CD4-positive, alpha-beta memory T cell (primary cell): ENCODE measurements at regions of chr3 and their contacts with region 1.

Region 1: DNA sequence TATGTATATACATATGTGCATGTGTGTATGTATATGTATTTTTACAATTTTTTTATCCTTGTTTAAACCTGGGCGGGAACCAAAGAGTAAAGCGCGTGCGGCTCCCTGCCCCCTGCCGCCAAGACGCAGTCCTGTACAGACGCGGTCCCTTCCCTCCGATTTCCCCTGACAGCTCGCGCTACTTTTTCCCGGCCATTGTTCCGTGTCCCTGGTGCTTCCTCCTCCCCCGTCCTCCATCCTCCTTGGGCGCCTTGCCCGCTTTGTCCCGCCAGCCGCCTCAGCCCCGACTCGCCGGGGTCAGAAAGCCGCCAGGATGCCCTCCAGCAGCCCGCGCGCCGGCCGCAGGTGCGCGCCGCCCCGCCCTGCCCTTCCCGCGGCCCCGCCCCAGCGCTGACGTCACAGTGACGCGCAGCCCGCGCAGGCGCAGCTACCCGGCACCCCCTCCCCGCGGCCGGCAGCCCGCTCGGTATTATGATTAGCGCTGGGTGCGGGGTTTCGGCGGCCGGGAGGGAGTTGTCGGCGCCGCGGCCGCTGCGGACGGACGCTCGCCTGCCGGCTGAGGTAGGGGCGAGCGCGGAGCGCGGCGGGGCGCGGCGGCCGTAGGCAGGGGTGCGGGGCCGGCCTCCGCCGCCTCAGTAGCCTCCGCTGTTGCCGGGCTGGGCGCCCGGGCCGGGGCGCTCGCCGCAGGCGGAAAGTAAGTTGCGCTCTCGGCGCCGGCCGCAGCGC is at the start of gene SNRK:
- DNase-seq: peak; percentile 86 to 97 (median 92)
- H3K4me3 ChIP-seq: peak within 1 kb of the TSS; percentile 84 to 88
- H3K4me3 Mint-ChIP-seq: peak within 1 kb of the TSS; percentile 98 to 100 (median 99)
- H3K27ac ChIP-seq: peak within 1 kb of the TSS; percentile 78
- H3K27ac Mint-ChIP-seq: peak within 1 kb of the TSS; percentile 99 to 100 (median 100)
- H3K4me1 ChIP-seq: peaks cover 32% of the 10 kb centered on the region
- H3K4me1 Mint-ChIP-seq: peaks cover 28 to 46% (median 32%) of the 10 kb centered on the region in 4 donors
- H3K27me3 ChIP-seq: no peaks in the 10 kb centered on the region
- H3K27me3 Mint-ChIP-seq: peaks cover 0 to 2% of the 10 kb centered on the region in 2 donors
- total RNA-seq, gene SNRK: 104 to 108 TPM

Region 2: GRCh38 chr3:43180027-43180426 is 106.3 kb before region 1 on chr3:
- CTCF ChIA-PET with region 1: interaction called, 6 read pairs
- POLR2A ChIA-PET with region 1: interaction called, 22 read pairs
- intact Hi-C with region 1: no loop called
- DNase-seq: peak; percentile 51 to 69 (median 65)
- H3K4me3 ChIP-seq: peak overlapping the region in 1 of 2 donors; percentile 20
- H3K4me3 Mint-ChIP-seq: peak overlapping the region; percentile 52 to 87 (median 78)
- H3K27ac ChIP-seq: peak overlapping the region; percentile 27
- H3K27ac Mint-ChIP-seq: peak overlapping the region; percentile 83 to 98 (median 95)
- H3K4me1 ChIP-seq: peaks cover 46% of the 10 kb centered on the region
- H3K4me1 Mint-ChIP-seq: peaks cover 40 to 72% (median 63%) of the 10 kb centered on the region in 4 donors
- H3K27me3 ChIP-seq: no peaks in the 10 kb centered on the region
- H3K27me3 Mint-ChIP-seq: no peaks in the 10 kb centered on the region

Region 3: GRCh38 chr3:43296565-43296964 is 10.3 kb after region 1 on chr3:
- CTCF ChIA-PET with region 1: interaction called, 9 read pairs
- POLR2A ChIA-PET with region 1: interaction called, 106 read pairs
- intact Hi-C with region 1: loop called (anchors 1 kb)
- DNase-seq: peak; percentile 76 to 86 (median 83)
- H3K4me3 ChIP-seq: peak overlapping the region in 1 of 2 donors; percentile 16
- H3K4me3 Mint-ChIP-seq: peak overlapping the region; percentile 67 to 86 (median 79)
- H3K27ac ChIP-seq: peak overlapping the region; percentile 59
- H3K27ac Mint-ChIP-seq: peak overlapping the region; percentile 87 to 97 (median 94)
- H3K4me1 ChIP-seq: peaks cover 97% of the 10 kb centered on the region
- H3K4me1 Mint-ChIP-seq: peaks cover 59 to 88% (median 72%) of the 10 kb centered on the region in 4 donors
- H3K27me3 ChIP-seq: no peaks in the 10 kb centered on the region
- H3K27me3 Mint-ChIP-seq: no peaks in the 10 kb centered on the region

Region 4: GRCh38 chr3:43345877-43346276 is 59.6 kb after region 1 on chr3:
- CTCF ChIA-PET with region 1: interaction called, 6 read pairs
- POLR2A ChIA-PET with region 1: interaction called, 61 read pairs
- intact Hi-C with region 1: loop called (anchors 1 kb)
- DNase-seq: no peak
- H3K4me3 ChIP-seq: no peak overlapping the region
- H3K4me3 Mint-ChIP-seq: peak overlapping the region in 7 of 8 donors; percentile 23 to 76 (median 61)
- H3K27ac ChIP-seq: no peak overlapping the region
- H3K27ac Mint-ChIP-seq: peak overlapping the region; percentile 90 to 98 (median 95)
- H3K4me1 ChIP-seq: peaks cover 84% of the 10 kb centered on the region
- H3K4me1 Mint-ChIP-seq: peaks cover 52 to 84% (median 68%) of the 10 kb centered on the region in 4 donors
- H3K27me3 ChIP-seq: no peaks in the 10 kb centered on the region
- H3K27me3 Mint-ChIP-seq: no peaks in the 10 kb centered on the region

Region 5: GRCh38 chr3:43503067-43503728 is 216.9 kb after region 1 on chr3:
- CTCF ChIA-PET with region 1: interaction called, 7 read pairs
- POLR2A ChIA-PET with region 1: interaction called, 5 read pairs
- intact Hi-C with region 1: loop called (anchors 1 kb)
- DNase-seq: peak in 4 of 5 donors; percentile 54 to 61 (median 60)
- H3K4me3 ChIP-seq: no peak overlapping the region
- H3K4me3 Mint-ChIP-seq: no peak overlapping the region
- H3K27ac ChIP-seq: no peak overlapping the region
- H3K27ac Mint-ChIP-seq: peak overlapping the region in 5 of 7 donors; percentile 24 to 88 (median 63)
- H3K4me1 ChIP-seq: peaks cover 39% of the 10 kb centered on the region
- H3K4me1 Mint-ChIP-seq: peaks cover 32 to 52% (median 41%) of the 10 kb centered on the region in 4 donors
- H3K27me3 ChIP-seq: no peaks in the 10 kb centered on the region
- H3K27me3 Mint-ChIP-seq: no peaks in the 10 kb centered on the region